Naive thymus-derived CD4-positive, alpha-beta T cell (primary cell): ENCODE measurements at regions of chr2 and their contacts with region 1.

Region 1: DNA sequence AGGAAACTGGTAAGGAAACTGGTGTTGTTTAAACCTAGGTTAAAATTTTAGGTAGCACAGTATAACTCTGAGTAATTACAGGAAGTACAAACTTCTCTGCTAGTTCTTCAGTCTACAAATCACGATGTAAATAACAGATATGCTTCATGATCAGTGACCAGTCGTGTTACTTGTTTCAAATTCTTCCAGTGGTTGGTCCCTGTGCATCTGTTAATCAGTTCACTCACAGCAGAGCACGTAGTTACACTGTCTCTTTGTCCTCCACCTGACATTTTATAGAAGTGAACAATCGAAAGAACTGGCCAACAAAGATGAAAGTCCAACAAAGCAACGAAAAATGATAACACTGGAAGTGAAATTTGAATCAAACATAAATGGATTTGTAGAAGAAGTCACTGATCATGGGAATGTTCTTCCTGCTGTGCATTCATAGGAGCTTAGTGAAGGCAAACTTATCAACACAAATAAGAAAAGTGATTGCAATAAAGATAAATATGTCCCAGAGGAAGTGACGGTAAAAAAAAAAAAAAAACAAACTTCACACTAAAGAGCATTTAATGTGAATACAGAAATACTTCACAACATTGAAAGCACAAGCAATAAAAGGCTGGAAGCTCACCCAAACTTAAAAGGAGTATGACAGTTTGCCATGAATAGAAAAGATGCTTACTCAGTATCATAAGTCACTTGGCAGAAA is 7.0 kb downstream of the EIF2AK2 start:
- DNase-seq: no peak
- ATAC-seq: peak; percentile 73
- H3K4me3 ChIP-seq: no peak overlapping the region
- H3K4me3 Mint-ChIP-seq: peak overlapping the region in 5 of 10 donors; percentile 5 to 24 (median 12)
- H3K27ac ChIP-seq: no peak overlapping the region
- H3K27ac Mint-ChIP-seq: peak overlapping the region in 6 of 9 donors; percentile 2 to 73 (median 42)
- H3K4me1 ChIP-seq: peaks cover 4 to 9% of the 10 kb centered on the region in 2 donors
- H3K4me1 Mint-ChIP-seq: peaks cover 13 to 58% (median 48%) of the 10 kb centered on the region in 7 donors
- H3K27me3 ChIP-seq: no peaks in the 10 kb centered on the region
- H3K27me3 Mint-ChIP-seq: no peaks in the 10 kb centered on the region

Region 2: GRCh38 chr2:36741188-36741837 is 408.5 kb before region 1 on chr2:
- CTCF ChIA-PET with region 1: no interaction called
- POLR2A ChIA-PET with region 1: no interaction called
- intact Hi-C with region 1: no loop called
- DNase-seq: no peak
- ATAC-seq: no peak
- H3K4me3 ChIP-seq: no peak overlapping the region
- H3K4me3 Mint-ChIP-seq: no peak overlapping the region
- H3K27ac ChIP-seq: no peak overlapping the region
- H3K27ac Mint-ChIP-seq: no peak overlapping the region
- H3K4me1 ChIP-seq: no peaks in the 10 kb centered on the region
- H3K4me1 Mint-ChIP-seq: peaks cover 6 to 15% (median 13%) of the 10 kb centered on the region in 7 donors
- H3K27me3 ChIP-seq: no peaks in the 10 kb centered on the region
- H3K27me3 Mint-ChIP-seq: peaks cover 39 to 58% (median 51%) of the 10 kb centered on the region in 5 donors

Region 3: GRCh38 chr2:37105150-37105549 is 44.6 kb before region 1 on chr2:
- CTCF ChIA-PET with region 1: no interaction called
- POLR2A ChIA-PET with region 1: no interaction called
- intact Hi-C with region 1: loop called in 1 of 2 experiments (anchors 5 kb)
- DNase-seq: no peak
- ATAC-seq: no peak
- H3K4me3 ChIP-seq: no peak overlapping the region
- H3K4me3 Mint-ChIP-seq: no peak overlapping the region
- H3K27ac ChIP-seq: no peak overlapping the region
- H3K27ac Mint-ChIP-seq: peak overlapping the region in 2 of 9 donors; percentile 4 to 62
- H3K4me1 ChIP-seq: no peaks in the 10 kb centered on the region
- H3K4me1 Mint-ChIP-seq: no peaks in the 10 kb centered on the region
- H3K27me3 ChIP-seq: no peaks in the 10 kb centered on the region
- H3K27me3 Mint-ChIP-seq: no peaks in the 10 kb centered on the region

Region 4: GRCh38 chr2:37119157-37119556 is 30.6 kb before region 1 on chr2:
- CTCF ChIA-PET with region 1: no interaction called
- POLR2A ChIA-PET with region 1: no interaction called
- intact Hi-C with region 1: no loop called
- DNase-seq: no peak
- ATAC-seq: no peak
- H3K4me3 ChIP-seq: no peak overlapping the region
- H3K4me3 Mint-ChIP-seq: no peak overlapping the region
- H3K27ac ChIP-seq: no peak overlapping the region
- H3K27ac Mint-ChIP-seq: peak overlapping the region in 1 of 9 donors; percentile 26
- H3K4me1 ChIP-seq: no peaks in the 10 kb centered on the region
- H3K4me1 Mint-ChIP-seq: peaks cover 0 to 12% (median 0%) of the 10 kb centered on the region in 7 donors
- H3K27me3 ChIP-seq: no peaks in the 10 kb centered on the region
- H3K27me3 Mint-ChIP-seq: no peaks in the 10 kb centered on the region